ENCODE measurements at regions of chr3 and their contacts with region 1.

Region 1: GRCh38 chr3:15797642-15798303 is at the start of gene ANKRD28:
- DNase-seq: peak; percentile 80
- H3K4me3 Mint-ChIP-seq: peak within 1 kb of the TSS; percentile 86
- H3K27ac Mint-ChIP-seq: peak within 1 kb of the TSS; percentile 98
- H3K4me1 Mint-ChIP-seq: peaks cover 63% of the 10 kb centered on the region
- H3K27me3 Mint-ChIP-seq: no peaks in the 10 kb centered on the region
- total RNA-seq, gene ANKRD28: 38.1 and 38.7 TPM in 2 replicates

Region 2: DNA sequence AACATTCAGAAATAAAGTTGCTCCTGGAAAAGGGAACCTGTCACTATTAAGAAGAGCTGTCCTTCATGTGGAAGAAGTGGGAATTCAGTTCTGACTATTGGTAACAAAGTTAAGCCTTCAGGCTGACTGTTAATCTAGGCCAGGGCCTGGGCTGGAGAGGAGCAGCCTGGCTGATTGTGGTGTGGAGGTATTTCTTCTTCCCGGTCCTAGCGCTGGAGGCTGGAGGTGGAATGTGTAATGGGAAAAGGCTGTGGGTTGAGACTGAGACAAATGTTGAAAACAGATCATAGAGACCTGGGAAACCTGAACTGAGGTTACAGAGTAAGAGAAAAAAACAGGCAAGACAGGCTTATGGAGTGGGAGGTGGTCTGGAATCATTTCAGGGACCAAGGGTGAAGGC is 441.6 kb before region 1 on chr3:
- intact Hi-C with region 1: no loop called
- DNase-seq: no peak
- H3K4me3 Mint-ChIP-seq: peak overlapping the region; percentile 65
- H3K27ac Mint-ChIP-seq: peak overlapping the region; percentile 90
- H3K4me1 Mint-ChIP-seq: peaks cover 33% of the 10 kb centered on the region
- H3K27me3 Mint-ChIP-seq: no peaks in the 10 kb centered on the region

Region 3: GRCh38 chr3:15601397-15602145 is 196.2 kb before region 1 on chr3 and contains the starts of genes BTD and HACL1:
- intact Hi-C with region 1: no loop called
- DNase-seq: peak; percentile 99
- H3K4me3 Mint-ChIP-seq: peak within 1 kb of the TSS; percentile 98
- H3K27ac Mint-ChIP-seq: peak within 1 kb of the TSS; percentile 98
- H3K4me1 Mint-ChIP-seq: peaks cover 30% of the 10 kb centered on the region
- H3K27me3 Mint-ChIP-seq: peaks cover 2% of the 10 kb centered on the region
- total RNA-seq, gene BTD: 2.0 and 2.1 TPM in 2 replicates
- total RNA-seq, gene HACL1: 19.3 and 21.4 TPM in 2 replicates

Region 4: DNA sequence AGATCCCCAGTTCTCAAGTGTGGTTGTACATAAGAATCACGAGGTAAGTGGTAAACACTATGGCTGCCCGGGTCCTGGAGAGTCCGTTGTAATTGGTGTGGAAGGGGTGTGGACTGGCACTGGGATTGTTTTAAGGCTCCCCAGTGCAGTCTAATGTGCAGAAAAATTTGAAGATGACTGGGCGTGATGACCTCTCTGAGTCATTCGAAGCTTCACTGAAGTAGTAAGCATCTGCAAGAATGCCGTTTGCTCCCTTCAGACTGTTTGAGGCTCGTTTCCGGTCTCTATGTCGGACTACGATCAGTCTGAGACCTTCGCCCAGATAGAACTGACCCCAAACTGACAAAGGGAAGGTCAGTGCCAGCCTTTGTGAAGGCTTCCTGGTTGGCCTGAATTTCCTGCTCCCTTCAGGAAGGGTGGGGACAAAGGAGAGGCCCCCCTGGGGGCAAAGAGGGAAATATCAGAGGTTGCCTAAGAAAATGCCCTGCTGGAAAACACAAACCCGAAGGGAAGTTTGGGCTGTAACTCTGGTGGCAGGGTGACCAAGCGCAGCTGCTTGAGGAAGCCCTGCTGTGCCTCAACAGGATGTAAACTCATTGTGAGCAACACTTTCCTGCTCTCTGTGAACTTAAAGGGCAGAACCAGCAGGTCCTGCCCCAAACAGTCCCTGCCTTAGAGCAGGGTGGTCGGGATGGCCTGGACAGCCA is 161.6 kb before region 1 on chr3:
- intact Hi-C with region 1: loop called (anchors 1 kb)
- DNase-seq: peak; percentile 78
- H3K4me3 Mint-ChIP-seq: peak overlapping the region; percentile 68
- H3K27ac Mint-ChIP-seq: peak overlapping the region; percentile 94
- H3K4me1 Mint-ChIP-seq: peaks cover 40% of the 10 kb centered on the region
- H3K27me3 Mint-ChIP-seq: no peaks in the 10 kb centered on the region

Region 5: GRCh38 chr3:15676259-15676658 is 121.5 kb before region 1 on chr3:
- intact Hi-C with region 1: no loop called
- DNase-seq: no peak
- H3K4me3 Mint-ChIP-seq: no peak overlapping the region
- H3K27ac Mint-ChIP-seq: no peak overlapping the region
- H3K4me1 Mint-ChIP-seq: no peaks in the 10 kb centered on the region
- H3K27me3 Mint-ChIP-seq: no peaks in the 10 kb centered on the region

Region 6: GRCh38 chr3:15743587-15744009 is 54.2 kb before region 1 on chr3:
- intact Hi-C with region 1: loop called (anchors 1 kb)
- DNase-seq: no peak
- H3K4me3 Mint-ChIP-seq: no peak overlapping the region
- H3K27ac Mint-ChIP-seq: no peak overlapping the region
- H3K4me1 Mint-ChIP-seq: peaks cover 45% of the 10 kb centered on the region
- H3K27me3 Mint-ChIP-seq: no peaks in the 10 kb centered on the region

Region 7: DNA sequence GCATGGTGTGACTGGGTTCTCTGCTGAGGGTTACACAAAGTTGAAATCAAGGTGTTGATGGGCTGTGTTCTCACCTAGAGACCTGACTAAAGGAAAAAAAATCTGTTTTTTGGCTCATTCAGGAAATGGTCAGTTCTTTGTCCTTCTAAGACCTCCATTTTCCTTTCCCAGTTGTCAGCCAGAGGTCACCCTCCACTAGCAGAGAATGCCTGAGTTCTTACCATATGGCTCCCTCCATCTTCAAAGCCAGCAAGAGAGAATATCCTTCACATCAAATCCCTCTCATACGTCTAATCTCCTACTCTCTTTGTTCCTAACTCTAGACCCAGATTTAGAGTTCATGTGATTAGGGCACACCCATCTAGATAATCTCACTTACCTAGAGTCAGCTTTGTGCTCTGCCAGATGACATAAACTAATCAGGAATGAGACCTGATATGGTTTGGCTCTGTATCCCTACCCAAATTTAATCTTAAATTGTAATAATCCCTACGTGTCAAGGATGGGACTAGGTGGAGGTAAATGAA is 19.4 kb before region 1 on chr3:
- intact Hi-C with region 1: loop called (anchors 1 kb)
- DNase-seq: no peak
- H3K4me3 Mint-ChIP-seq: no peak overlapping the region
- H3K27ac Mint-ChIP-seq: no peak overlapping the region
- H3K4me1 Mint-ChIP-seq: peaks cover 26% of the 10 kb centered on the region
- H3K27me3 Mint-ChIP-seq: no peaks in the 10 kb centered on the region

Region 8: GRCh38 chr3:16300881-16301359 is 503.1 kb after region 1 on chr3:
- intact Hi-C with region 1: loop called (anchors 5 kb)
- DNase-seq: peak; percentile 90
- H3K4me3 Mint-ChIP-seq: peak overlapping the region; percentile 86
- H3K27ac Mint-ChIP-seq: peak overlapping the region; percentile 97
- H3K4me1 Mint-ChIP-seq: peaks cover 83% of the 10 kb centered on the region
- H3K27me3 Mint-ChIP-seq: no peaks in the 10 kb centered on the region